Activated CD4-positive, alpha-beta memory T cell treated with anti-CD3 and anti-CD28 coated beads for 36 hours (primary cell): ENCODE measurements at regions of chr16 and their contacts with region 1.

Region 1: DNA sequence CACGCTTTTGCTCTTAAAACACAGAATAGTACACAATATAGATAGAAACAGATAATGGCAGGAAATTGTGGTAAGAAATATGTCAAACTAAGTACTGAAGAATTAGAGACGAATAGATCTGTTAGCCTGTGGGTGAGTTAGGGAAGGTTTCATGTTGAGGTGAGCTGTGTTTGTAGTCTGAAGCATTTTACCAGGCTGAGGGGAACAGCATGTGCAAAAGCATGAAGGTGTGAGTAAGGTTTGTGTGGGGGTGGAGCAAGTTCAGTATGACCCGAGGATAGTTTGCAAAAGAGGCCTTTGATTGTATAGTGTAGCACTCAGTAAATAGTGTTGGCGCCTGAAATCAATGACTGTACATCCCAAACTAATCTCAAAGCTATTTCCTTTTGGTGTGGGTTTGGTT is 13.8 kb downstream of the IGSF6 start:
- DNase-seq: peak; percentile 57
- H3K4me3 Mint-ChIP-seq: no peak overlapping the region
- H3K27ac Mint-ChIP-seq: peak overlapping the region; percentile 60
- H3K4me1 Mint-ChIP-seq: peaks cover 26% of the 10 kb centered on the region
- H3K27me3 Mint-ChIP-seq: no peaks in the 10 kb centered on the region

Region 2: DNA sequence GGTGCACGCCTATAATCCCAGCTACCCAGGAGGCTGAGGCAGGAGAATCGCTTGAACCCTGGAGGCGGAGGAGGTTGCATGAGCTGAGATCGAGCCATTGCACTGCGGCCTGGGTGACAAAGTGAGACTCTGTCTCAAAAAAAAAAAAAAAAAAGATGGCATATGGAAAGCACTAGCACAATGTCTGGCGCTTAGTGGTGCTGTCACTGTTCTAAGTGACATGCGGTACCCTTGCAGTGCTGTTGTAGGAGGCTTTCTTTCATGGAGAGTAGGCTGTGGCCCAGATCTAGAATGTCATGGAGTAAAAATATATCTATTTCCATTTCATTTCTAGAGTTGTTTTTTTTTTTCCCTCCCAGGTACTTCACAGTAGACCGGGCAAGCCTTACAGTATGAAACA is 53.8 kb before region 1 on chr16:
- CTCF ChIA-PET with region 1: interaction called, 39 read pairs
- POLR2A ChIA-PET with region 1: no interaction called
- intact Hi-C with region 1: no loop called
- DNase-seq: no peak
- H3K4me3 Mint-ChIP-seq: no peak overlapping the region
- H3K27ac Mint-ChIP-seq: no peak overlapping the region
- H3K4me1 Mint-ChIP-seq: peaks cover 2% of the 10 kb centered on the region
- H3K27me3 Mint-ChIP-seq: no peaks in the 10 kb centered on the region

Region 3: DNA sequence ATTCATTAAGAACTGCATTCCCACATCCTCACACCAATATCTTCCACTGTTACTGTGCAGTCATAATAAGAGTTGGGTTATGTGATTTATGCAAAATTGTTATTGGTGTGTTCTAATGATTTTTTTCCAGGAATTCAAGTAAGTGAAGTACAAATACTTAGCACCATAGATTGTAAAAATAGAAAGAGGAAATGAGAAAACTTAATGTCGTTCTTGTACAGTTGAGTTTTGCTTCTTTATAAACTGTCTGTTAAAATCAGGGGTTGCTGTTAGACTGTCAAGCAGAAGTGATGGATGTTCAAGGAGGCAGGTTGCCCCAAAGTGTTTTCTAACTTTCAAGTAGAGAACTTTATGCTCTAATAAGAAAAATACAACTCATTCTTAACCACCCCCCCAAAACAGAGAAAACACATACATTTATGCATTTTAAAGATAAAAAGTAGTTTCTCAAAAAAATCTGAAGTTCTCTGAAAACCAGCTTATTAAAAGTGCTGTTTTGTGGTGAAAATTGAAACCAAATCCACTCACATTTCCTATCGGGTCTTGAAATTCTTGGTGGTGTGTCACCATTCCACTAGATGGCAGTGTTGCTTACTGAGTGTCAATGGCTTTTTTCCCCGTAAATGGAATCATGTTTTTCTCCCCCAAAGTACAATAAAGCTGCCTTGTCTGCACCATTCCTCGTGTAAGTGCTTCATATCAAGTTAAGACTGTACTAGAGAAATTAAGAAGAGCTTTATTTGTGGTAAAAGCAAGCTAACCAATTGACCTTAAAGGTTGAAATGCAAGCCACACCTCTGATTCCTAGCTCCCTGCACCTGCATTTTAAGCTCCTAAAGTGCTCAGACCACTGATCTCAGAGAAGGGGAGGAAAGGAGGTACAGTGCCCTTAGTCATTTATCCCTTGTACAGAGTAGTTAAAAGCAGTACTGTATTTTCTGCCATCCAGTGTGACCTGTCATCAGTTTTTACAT is 18.5 kb after region 1 on chr16:
- CTCF ChIA-PET with region 1: interaction called, 15 read pairs
- POLR2A ChIA-PET with region 1: no interaction called
- intact Hi-C with region 1: no loop called
- DNase-seq: peak; percentile 29
- H3K4me3 Mint-ChIP-seq: no peak overlapping the region
- H3K27ac Mint-ChIP-seq: no peak overlapping the region
- H3K4me1 Mint-ChIP-seq: peaks cover 41% of the 10 kb centered on the region
- H3K27me3 Mint-ChIP-seq: no peaks in the 10 kb centered on the region